ENCODE measurements at regions of chrX and their contacts with region 1.

Region 1: GRCh38 chrX:45497290-45497689 is 296.6 kb upstream of the DIPK2B start:
- DNase-seq: peak; percentile 22
- ATAC-seq: peak; percentile 74
- H3K4me3 Mint-ChIP-seq: no peak overlapping the region
- H3K27ac Mint-ChIP-seq: no peak overlapping the region
- H3K4me1 Mint-ChIP-seq: no peaks in the 10 kb centered on the region
- H3K27me3 Mint-ChIP-seq: peaks cover 2% of the 10 kb centered on the region

Region 2: GRCh38 chrX:44282753-44283152 is 1214.5 kb before region 1 on chrX:
- CTCF ChIA-PET with region 1: no interaction called
- POLR2A ChIA-PET with region 1: no interaction called
- intact Hi-C with region 1: no loop called
- DNase-seq: no peak
- ATAC-seq: no peak
- H3K4me3 Mint-ChIP-seq: no peak overlapping the region
- H3K27ac Mint-ChIP-seq: no peak overlapping the region
- H3K4me1 Mint-ChIP-seq: no peaks in the 10 kb centered on the region
- H3K27me3 Mint-ChIP-seq: no peaks in the 10 kb centered on the region

Region 3: GRCh38 chrX:44698328-44698727 is 799.0 kb before region 1 on chrX:
- CTCF ChIA-PET with region 1: no interaction called
- POLR2A ChIA-PET with region 1: no interaction called
- intact Hi-C with region 1: no loop called
- DNase-seq: no peak
- ATAC-seq: no peak
- H3K4me3 Mint-ChIP-seq: no peak overlapping the region
- H3K27ac Mint-ChIP-seq: no peak overlapping the region
- H3K4me1 Mint-ChIP-seq: no peaks in the 10 kb centered on the region
- H3K27me3 Mint-ChIP-seq: no peaks in the 10 kb centered on the region

Region 4: DNA sequence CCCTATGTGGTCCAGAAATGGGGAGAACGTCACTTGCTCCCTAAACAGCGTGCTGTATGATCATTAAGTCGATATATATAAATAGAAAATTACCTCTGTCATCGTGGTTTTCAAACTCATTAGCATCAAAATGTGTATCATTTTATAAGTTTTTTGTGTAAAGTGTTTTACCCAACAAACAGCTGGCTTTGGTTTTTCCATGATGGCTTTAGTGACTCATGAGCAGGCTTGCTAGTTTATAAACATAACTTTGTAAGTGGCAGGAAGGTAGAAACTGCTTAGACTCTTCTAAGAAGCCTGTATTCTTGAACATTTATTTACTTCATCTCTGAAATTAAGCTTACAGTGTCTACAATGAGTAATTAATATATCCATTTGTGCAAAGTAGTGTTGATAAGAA is 188.2 kb before region 1 on chrX:
- CTCF ChIA-PET with region 1: no interaction called
- POLR2A ChIA-PET with region 1: no interaction called
- intact Hi-C with region 1: no loop called
- DNase-seq: no peak
- ATAC-seq: no peak
- H3K4me3 Mint-ChIP-seq: no peak overlapping the region
- H3K27ac Mint-ChIP-seq: no peak overlapping the region
- H3K4me1 Mint-ChIP-seq: no peaks in the 10 kb centered on the region
- H3K27me3 Mint-ChIP-seq: no peaks in the 10 kb centered on the region

Region 5: DNA sequence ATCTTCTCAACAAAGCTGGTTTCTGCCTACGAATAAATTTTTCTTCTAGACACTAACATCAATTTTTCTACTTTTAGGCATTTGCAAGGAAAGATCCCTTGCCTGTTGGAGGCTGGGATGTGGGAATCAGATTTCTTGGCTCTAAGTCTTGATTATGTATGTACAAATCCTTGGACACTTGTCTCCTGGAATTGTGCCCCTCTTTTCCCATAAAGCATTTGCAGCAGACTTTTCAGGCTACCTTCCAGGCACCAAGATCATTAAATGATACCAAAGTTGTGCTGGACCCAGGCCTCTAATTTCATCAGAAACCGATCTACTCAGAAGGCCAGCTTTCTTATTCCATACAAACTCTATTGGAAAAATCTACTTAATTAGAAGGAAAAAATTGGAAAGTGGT is 42.9 kb after region 1 on chrX:
- CTCF ChIA-PET with region 1: no interaction called
- POLR2A ChIA-PET with region 1: no interaction called
- intact Hi-C with region 1: loop called in 1 of 2 experiments (anchors 5 kb)
- DNase-seq: no peak
- ATAC-seq: no peak
- H3K4me3 Mint-ChIP-seq: no peak overlapping the region
- H3K27ac Mint-ChIP-seq: no peak overlapping the region
- H3K4me1 Mint-ChIP-seq: no peaks in the 10 kb centered on the region
- H3K27me3 Mint-ChIP-seq: peaks cover 2% of the 10 kb centered on the region

Region 6: GRCh38 chrX:45557390-45557789 is 60.1 kb after region 1 on chrX:
- CTCF ChIA-PET with region 1: no interaction called
- POLR2A ChIA-PET with region 1: no interaction called
- intact Hi-C with region 1: no loop called
- DNase-seq: no peak
- ATAC-seq: no peak
- H3K4me3 Mint-ChIP-seq: no peak overlapping the region
- H3K27ac Mint-ChIP-seq: no peak overlapping the region
- H3K4me1 Mint-ChIP-seq: no peaks in the 10 kb centered on the region
- H3K27me3 Mint-ChIP-seq: no peaks in the 10 kb centered on the region